CD4-positive, alpha-beta T cell (primary cell): ENCODE measurements at regions of chr22 and their contacts with region 1.

Region 1: GRCh38 chr22:30591588-30592359 is at the start of gene PES1:
- DNase-seq: peak; percentile 91 to 99 (median 94)
- ATAC-seq: peak; percentile 96
- H3K4me3 ChIP-seq: peak within 1 kb of the TSS; percentile 96
- H3K4me3 Mint-ChIP-seq: no peak within 1 kb of the TSS
- H3K27ac ChIP-seq: peak within 1 kb of the TSS; percentile 85 to 97
- H3K27ac Mint-ChIP-seq: no peak within 1 kb of the TSS
- H3K4me1 ChIP-seq: peaks cover 16% of the 10 kb centered on the region
- H3K4me1 Mint-ChIP-seq: no peaks in the 10 kb centered on the region
- H3K27me3 ChIP-seq: no peaks in the 10 kb centered on the region
- H3K27me3 Mint-ChIP-seq: no peaks in the 10 kb centered on the region
- CTCF ChIP-seq: no peak
- total RNA-seq, gene PES1: 28.4 to 30.5 TPM

Region 2: GRCh38 chr22:30615543-30615954 is 23.8 kb after region 1 on chr22:
- CTCF ChIA-PET with region 1: no interaction called
- POLR2A ChIA-PET with region 1: no interaction called
- intact Hi-C with region 1: no loop called
- DNase-seq: no peak
- ATAC-seq: no peak
- H3K4me3 ChIP-seq: no peak overlapping the region
- H3K4me3 Mint-ChIP-seq: no peak overlapping the region
- H3K27ac ChIP-seq: no peak overlapping the region
- H3K27ac Mint-ChIP-seq: no peak overlapping the region
- H3K4me1 ChIP-seq: no peaks in the 10 kb centered on the region
- H3K4me1 Mint-ChIP-seq: no peaks in the 10 kb centered on the region
- H3K27me3 ChIP-seq: no peaks in the 10 kb centered on the region
- H3K27me3 Mint-ChIP-seq: no peaks in the 10 kb centered on the region
- CTCF ChIP-seq: no peak

Region 3: GRCh38 chr22:30667494-30668385 is 76.0 kb after region 1 on chr22 and contains the start of gene DUSP18:
- CTCF ChIA-PET with region 1: no interaction called
- POLR2A ChIA-PET with region 1: no interaction called
- intact Hi-C with region 1: loop called in 1 of 2 experiments (anchors 5 kb)
- DNase-seq: peak; percentile 89 to 98 (median 94)
- ATAC-seq: peak; percentile 90
- H3K4me3 ChIP-seq: peak within 1 kb of the TSS; percentile 97
- H3K4me3 Mint-ChIP-seq: peak within 1 kb of the TSS; percentile 93
- H3K27ac ChIP-seq: no peak within 1 kb of the TSS
- H3K27ac Mint-ChIP-seq: peak within 1 kb of the TSS; percentile 74
- H3K4me1 ChIP-seq: peaks cover 27% of the 10 kb centered on the region
- H3K4me1 Mint-ChIP-seq: peaks cover 15% of the 10 kb centered on the region
- H3K27me3 ChIP-seq: no peaks in the 10 kb centered on the region
- H3K27me3 Mint-ChIP-seq: no peaks in the 10 kb centered on the region
- CTCF ChIP-seq: no peak
- total RNA-seq, gene DUSP18: 5.7 to 6.2 TPM

Region 4: GRCh38 chr22:31489604-31490495 is 898.1 kb after region 1 on chr22 and contains the start of gene EIF4ENIF1:
- CTCF ChIA-PET with region 1: no interaction called
- POLR2A ChIA-PET with region 1: no interaction called
- intact Hi-C with region 1: loop called in 1 of 2 experiments (anchors 10 kb)
- DNase-seq: peak; percentile 78 to 93 (median 84)
- ATAC-seq: peak; percentile 77
- H3K4me3 ChIP-seq: peak within 1 kb of the TSS; percentile 78
- H3K4me3 Mint-ChIP-seq: peak within 1 kb of the TSS; percentile 91
- H3K27ac ChIP-seq: peak within 1 kb of the TSS; percentile 88 to 92
- H3K27ac Mint-ChIP-seq: peak within 1 kb of the TSS; percentile 97
- H3K4me1 ChIP-seq: peaks cover 38% of the 10 kb centered on the region
- H3K4me1 Mint-ChIP-seq: peaks cover 57% of the 10 kb centered on the region
- H3K27me3 ChIP-seq: no peaks in the 10 kb centered on the region
- H3K27me3 Mint-ChIP-seq: no peaks in the 10 kb centered on the region
- CTCF ChIP-seq: no peak
- total RNA-seq, gene EIF4ENIF1: 9.4 to 10.6 TPM